ENCODE measurements at regions of chr17 and their contacts with region 1.

Region 1: DNA sequence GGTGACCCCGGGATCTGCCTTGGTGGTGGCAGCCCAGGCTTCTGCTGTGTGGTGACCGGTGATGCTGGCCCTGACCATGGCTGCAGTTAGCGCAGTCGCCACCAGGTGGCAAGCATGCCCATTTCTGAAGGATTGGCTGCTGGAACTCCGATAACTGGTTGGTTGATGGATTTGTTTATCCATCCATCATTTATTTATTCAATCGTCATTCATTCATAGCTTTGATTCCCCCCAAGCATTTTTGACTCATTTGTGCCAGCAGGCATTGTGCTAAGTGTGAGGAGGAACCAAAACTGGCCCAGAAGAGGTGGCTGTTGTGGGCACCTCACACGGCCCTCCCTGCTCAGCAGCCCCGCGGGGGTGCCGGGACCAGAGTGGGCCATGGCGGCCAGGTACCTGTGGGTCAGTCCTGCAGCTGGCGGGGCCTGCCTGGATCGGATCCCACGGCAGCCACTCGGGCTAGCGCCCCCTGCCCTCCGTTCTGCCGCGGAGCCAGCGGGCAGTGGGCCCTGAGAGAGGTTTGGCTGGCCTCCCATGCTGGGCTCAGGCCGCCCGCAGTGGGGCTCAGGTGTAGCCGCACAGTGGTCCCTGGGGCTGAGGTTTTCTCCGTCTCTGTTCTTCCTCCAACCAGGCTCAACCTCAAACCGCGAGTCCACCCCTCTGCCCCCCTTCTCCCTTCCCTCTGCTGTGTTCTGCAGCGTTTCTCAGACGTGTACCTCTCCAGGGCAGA is 28.8 kb upstream of the ITGA3 start:
- DNase-seq: peak; percentile 57 to 87 (median 80)
- ATAC-seq: peak; percentile 92
- H3K4me3 ChIP-seq: no peak overlapping the region
- H3K4me3 Mint-ChIP-seq: peak overlapping the region; percentile 37
- H3K27ac ChIP-seq: no peak overlapping the region
- H3K27ac Mint-ChIP-seq: no peak overlapping the region
- H3K4me1 ChIP-seq: peaks cover 8% of the 10 kb centered on the region
- H3K4me1 Mint-ChIP-seq: peaks cover 9% of the 10 kb centered on the region
- H3K27me3 ChIP-seq: peaks cover 0 to 5% of the 10 kb centered on the region in 2 experiments
- H3K27me3 Mint-ChIP-seq: peaks cover 29% of the 10 kb centered on the region
- CTCF ChIP-seq: peak; percentile 96

Region 2: DNA sequence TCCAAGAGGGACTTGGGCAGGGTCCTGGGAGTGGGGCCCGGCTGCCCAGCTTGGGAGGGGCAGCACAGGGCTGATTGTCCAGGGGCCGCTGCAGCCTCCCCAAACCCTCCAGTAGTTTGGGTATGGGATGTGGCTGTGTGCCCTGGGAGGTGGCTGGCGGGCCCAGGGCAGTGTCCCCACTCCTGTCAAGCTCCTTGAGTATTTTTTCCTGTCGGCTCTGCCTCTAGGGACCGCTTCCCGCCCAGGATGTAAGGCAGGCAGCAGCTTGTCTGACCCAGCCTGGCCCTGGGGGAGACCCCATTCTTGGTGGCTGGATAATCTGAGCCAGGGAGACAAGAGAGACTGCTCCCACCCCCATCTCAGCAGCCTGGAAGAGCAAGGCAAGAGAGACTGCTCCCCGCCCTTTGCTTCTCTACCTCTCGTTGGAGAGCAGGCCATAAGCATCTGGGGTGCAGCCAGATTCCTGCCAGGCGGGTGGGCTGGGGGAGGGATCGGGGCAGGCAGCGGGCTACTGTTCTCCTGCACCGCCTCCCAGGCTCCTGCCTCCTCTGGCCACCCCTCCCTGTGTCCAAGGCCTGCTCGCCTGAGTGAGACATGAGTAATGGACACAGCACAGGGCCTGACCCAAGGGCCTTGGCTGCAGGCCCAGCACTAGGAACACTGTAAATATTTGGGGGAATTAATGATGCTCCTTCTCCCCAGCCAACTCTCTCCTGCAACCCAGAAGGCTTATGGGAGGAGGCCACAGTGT is 10.4 kb after region 1 on chr17:
- CTCF ChIA-PET with region 1: interaction called, 10 read pairs
- POLR2A ChIA-PET with region 1: no interaction called
- intact Hi-C with region 1: no loop called
- DNase-seq: no peak
- ATAC-seq: no peak
- H3K4me3 ChIP-seq: no peak overlapping the region
- H3K4me3 Mint-ChIP-seq: no peak overlapping the region
- H3K27ac ChIP-seq: no peak overlapping the region
- H3K27ac Mint-ChIP-seq: no peak overlapping the region
- H3K4me1 ChIP-seq: no peaks in the 10 kb centered on the region
- H3K4me1 Mint-ChIP-seq: no peaks in the 10 kb centered on the region
- H3K27me3 ChIP-seq: no peaks in the 10 kb centered on the region
- H3K27me3 Mint-ChIP-seq: peaks cover 9% of the 10 kb centered on the region
- CTCF ChIP-seq: no peak

Region 3: GRCh38 chr17:50055426-50056230 is 28.6 kb after region 1 on chr17 and contains the start of gene ITGA3:
- CTCF ChIA-PET with region 1: interaction called, 8 read pairs
- POLR2A ChIA-PET with region 1: no interaction called
- intact Hi-C with region 1: loop called in 1 of 2 experiments (anchors 2 kb)
- DNase-seq: peak in 8 of 9 experiments; percentile 36 to 72 (median 63)
- ATAC-seq: peak; percentile 69
- H3K4me3 ChIP-seq: peak within 1 kb of the TSS; percentile 64 to 67
- H3K4me3 Mint-ChIP-seq: peak within 1 kb of the TSS; percentile 89
- H3K27ac ChIP-seq: no peak within 1 kb of the TSS
- H3K27ac Mint-ChIP-seq: peak within 1 kb of the TSS; percentile 72
- H3K4me1 ChIP-seq: peaks cover 9% of the 10 kb centered on the region
- H3K4me1 Mint-ChIP-seq: peaks cover 19% of the 10 kb centered on the region
- H3K27me3 ChIP-seq: no peaks in the 10 kb centered on the region
- H3K27me3 Mint-ChIP-seq: no peaks in the 10 kb centered on the region
- CTCF ChIP-seq: no peak
- total RNA-seq, gene ITGA3: 1.6 to 2.0 TPM

Region 4: DNA sequence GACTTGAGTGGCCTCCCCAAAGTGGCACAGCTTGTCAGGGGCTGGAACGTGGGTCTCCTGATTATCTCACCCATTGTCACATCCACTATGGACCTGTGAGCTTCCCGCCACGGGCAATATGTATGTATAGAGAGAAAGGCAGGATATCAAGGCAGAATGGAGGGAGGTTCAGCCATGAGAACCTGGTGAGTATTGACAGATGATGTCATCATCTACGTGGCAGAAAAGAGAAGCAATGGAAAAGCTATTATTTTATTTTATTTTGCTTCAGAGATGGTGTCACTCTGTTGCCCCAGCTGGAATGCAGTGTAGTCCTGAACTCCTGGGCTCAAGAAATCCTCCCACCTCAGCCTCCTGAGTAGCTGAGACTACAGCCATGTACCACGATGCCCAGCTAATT is 54.7 kb after region 1 on chr17:
- CTCF ChIA-PET with region 1: interaction called, 179 read pairs
- POLR2A ChIA-PET with region 1: interaction called, 4 read pairs
- intact Hi-C with region 1: no loop called
- DNase-seq: no peak
- ATAC-seq: no peak
- H3K4me3 ChIP-seq: no peak overlapping the region
- H3K4me3 Mint-ChIP-seq: no peak overlapping the region
- H3K27ac ChIP-seq: no peak overlapping the region
- H3K27ac Mint-ChIP-seq: no peak overlapping the region
- H3K4me1 ChIP-seq: no peaks in the 10 kb centered on the region
- H3K4me1 Mint-ChIP-seq: no peaks in the 10 kb centered on the region
- H3K27me3 ChIP-seq: no peaks in the 10 kb centered on the region
- H3K27me3 Mint-ChIP-seq: no peaks in the 10 kb centered on the region
- CTCF ChIP-seq: no peak

Measured in CD8-positive, alpha-beta T cell (primary cell).